GM12878 (cell line): ENCODE measurements at regions of chr4 and their contacts with region 1.

Region 1: GRCh38 chr4:2745981-2746806 is 9.9 kb downstream of the TNIP2 start:
- DNase-seq: peak; percentile 98
- ATAC-seq: peak; percentile 93
- H3K4me3 ChIP-seq: peak overlapping the region; percentile 22
- H3K27ac ChIP-seq: peak overlapping the region; percentile 98
- H3K4me1 ChIP-seq: peaks cover 47% of the 10 kb centered on the region
- H3K27me3 ChIP-seq: no peaks in the 10 kb centered on the region
- CTCF ChIP-seq: no peak
- EP300 ChIP-seq: peak; percentile 89 to 98
- POLR2A ChIP-seq: peak; percentile 58; the same call in 1 of the 2 replicates
- RAD21 ChIP-seq: no peak

Region 2: GRCh38 chr4:2689825-2690700 is 56.1 kb before region 1 on chr4:
- CTCF ChIA-PET with region 1: interaction called, 18 read pairs
- POLR2A ChIA-PET with region 1: interaction called, 16 read pairs
- RAD21 ChIA-PET with region 1: interaction called, 25 read pairs
- SMC1A ChIA-PET with region 1: interaction called, 31 read pairs
- in situ Hi-C with region 1: no loop called
- intact Hi-C with region 1: loop called (anchors 1 kb)
- DNase-seq: peak; percentile 51
- ATAC-seq: peak; percentile 87
- H3K4me3 ChIP-seq: no peak overlapping the region
- H3K27ac ChIP-seq: peak overlapping the region; percentile 66
- H3K4me1 ChIP-seq: peaks cover 40% of the 10 kb centered on the region
- H3K27me3 ChIP-seq: no peaks in the 10 kb centered on the region
- CTCF ChIP-seq: no peak
- EP300 ChIP-seq: no peak
- POLR2A ChIP-seq: peak; percentile 57
- RAD21 ChIP-seq: no peak

Region 3: DNA sequence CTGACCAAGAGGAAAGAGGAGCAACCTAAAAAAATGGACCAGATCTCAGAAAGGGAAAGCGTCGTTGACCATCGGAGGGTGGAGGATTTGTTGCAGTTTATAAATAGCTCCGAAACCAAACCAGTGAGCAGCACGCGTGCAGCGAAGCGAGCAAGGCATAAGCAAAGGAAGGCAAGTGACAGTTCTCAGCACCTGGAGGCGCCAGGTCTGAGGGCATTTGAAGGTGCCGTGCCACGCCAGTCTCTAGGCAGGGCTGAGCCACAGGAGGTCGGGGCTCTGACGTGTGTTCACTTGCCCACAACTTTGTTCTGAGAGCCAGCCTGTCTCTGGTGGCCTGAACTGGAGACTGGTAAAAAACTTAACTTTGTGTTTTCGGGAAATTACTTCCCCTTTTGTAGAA is 49.8 kb before region 1 on chr4:
- CTCF ChIA-PET with region 1: interaction called, 18 read pairs
- POLR2A ChIA-PET with region 1: interaction called, 16 read pairs
- RAD21 ChIA-PET with region 1: interaction called, 25 read pairs
- SMC1A ChIA-PET with region 1: interaction called, 31 read pairs
- in situ Hi-C with region 1: no loop called
- intact Hi-C with region 1: loop called (anchors 1 kb)
- DNase-seq: peak; percentile 96
- ATAC-seq: peak; percentile 97
- H3K4me3 ChIP-seq: peak overlapping the region; percentile 22; the same call in 1 of the 2 replicates
- H3K27ac ChIP-seq: peak overlapping the region; percentile 90
- H3K4me1 ChIP-seq: peaks cover 32% of the 10 kb centered on the region
- H3K27me3 ChIP-seq: no peaks in the 10 kb centered on the region
- CTCF ChIP-seq: peak; percentile 13 to 49 (median 27); a peak in 3 of 6 replicates
- EP300 ChIP-seq: peak; percentile 75 to 94
- POLR2A ChIP-seq: peak; percentile 41; the same call in 1 of the 2 replicates
- RAD21 ChIP-seq: peak; percentile 46; the same call in 1 of the 2 replicates

Region 4: DNA sequence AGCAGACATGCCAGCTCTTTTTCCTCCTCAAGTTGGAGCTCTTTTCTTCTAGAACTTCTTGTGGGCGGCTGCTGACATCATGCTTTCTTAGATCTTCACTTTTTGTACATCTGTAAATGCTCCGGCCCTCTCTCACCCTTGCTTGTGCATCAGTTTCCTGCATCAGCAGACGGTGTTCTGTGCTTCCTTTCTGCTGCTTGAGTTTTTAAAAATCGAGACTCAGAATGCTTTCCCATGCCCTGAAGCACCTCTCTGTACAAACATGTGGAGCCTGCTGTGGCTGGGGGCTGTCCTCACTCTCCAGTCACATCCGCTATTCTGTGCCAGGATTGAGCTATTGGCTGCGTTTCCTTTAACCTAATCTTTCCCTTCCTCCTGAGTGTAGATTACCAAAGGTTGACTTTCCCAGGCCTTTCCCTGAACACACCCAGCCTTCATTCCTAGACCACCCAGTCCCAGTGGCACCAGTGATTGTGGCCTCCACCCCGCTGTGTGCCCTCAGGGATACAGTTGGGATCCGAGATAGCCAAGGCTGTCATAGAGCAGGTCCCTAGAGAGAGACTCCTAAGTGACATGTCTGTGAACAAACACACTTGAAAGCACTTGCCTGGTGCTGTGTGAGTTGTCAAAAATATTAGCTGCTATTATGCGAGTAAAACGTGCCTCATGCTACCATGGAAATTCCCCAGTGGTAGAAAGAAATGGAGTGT is 32.0 kb before region 1 on chr4:
- CTCF ChIA-PET with region 1: no interaction called
- POLR2A ChIA-PET with region 1: no interaction called
- RAD21 ChIA-PET with region 1: no interaction called
- SMC1A ChIA-PET with region 1: interaction called, 3 read pairs
- in situ Hi-C with region 1: no loop called
- intact Hi-C with region 1: loop called (anchors 5 kb)
- DNase-seq: no peak
- ATAC-seq: peak; percentile 34; the same call in 2 of the 3 replicates
- H3K4me3 ChIP-seq: no peak overlapping the region
- H3K27ac ChIP-seq: peak overlapping the region; percentile 73
- H3K4me1 ChIP-seq: peaks cover 20% of the 10 kb centered on the region
- H3K27me3 ChIP-seq: no peaks in the 10 kb centered on the region
- CTCF ChIP-seq: no peak
- EP300 ChIP-seq: no peak
- POLR2A ChIP-seq: no peak
- RAD21 ChIP-seq: peak; percentile 25; the same call in 1 of the 2 replicates

Region 5: DNA sequence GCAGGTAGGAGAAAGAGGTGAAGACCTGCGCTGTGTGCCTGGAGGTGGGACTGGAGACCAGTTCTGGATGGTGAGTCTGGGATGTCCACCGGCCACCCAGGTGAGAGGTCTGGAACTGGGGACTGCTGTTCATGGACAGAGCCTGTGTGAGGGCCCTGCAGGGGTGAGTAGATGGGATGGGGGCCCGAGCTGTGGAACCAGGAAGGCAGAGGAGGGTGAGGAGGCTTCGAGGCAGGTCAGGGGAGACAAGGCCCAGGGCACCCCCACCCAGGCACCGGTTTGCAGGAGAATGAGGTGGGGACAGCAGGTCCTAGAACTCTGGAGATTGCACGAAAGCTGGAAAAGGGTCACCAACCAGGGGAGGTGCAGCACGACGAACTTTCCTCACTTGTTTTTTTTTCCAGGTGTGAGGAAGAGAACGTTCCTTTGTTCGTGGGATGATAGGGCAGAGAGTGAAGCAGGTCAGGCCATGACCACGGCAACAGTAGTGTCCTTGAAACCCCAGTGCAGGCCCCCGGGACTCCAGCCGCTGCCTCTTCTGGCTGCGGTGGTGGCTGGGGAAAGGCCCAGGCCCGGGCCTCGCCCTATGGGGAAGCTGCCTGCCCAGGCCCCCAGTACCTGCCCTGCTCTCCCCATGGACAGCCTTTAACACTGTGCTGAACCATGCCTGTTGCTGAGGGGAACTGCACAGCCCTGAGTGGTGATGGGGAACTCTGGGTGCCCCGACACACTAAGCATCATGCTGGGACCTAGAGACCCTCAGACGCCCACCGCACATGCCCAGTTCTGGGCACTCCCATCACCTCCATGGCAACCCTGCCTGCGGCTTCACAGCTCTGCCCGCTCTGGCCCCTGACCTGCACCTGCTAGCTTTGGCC is 13.0 kb before region 1 on chr4:
- CTCF ChIA-PET with region 1: interaction called, 3 read pairs
- POLR2A ChIA-PET with region 1: interaction called, 9 read pairs
- RAD21 ChIA-PET with region 1: interaction called, 16 read pairs
- SMC1A ChIA-PET with region 1: interaction called, 11 read pairs
- in situ Hi-C with region 1: no loop called
- intact Hi-C with region 1: no loop called
- DNase-seq: no peak
- ATAC-seq: peak; percentile 53
- H3K4me3 ChIP-seq: no peak overlapping the region
- H3K27ac ChIP-seq: no peak overlapping the region
- H3K4me1 ChIP-seq: peaks cover 3% of the 10 kb centered on the region; the same call in 1 of the 2 replicates
- H3K27me3 ChIP-seq: no peaks in the 10 kb centered on the region
- CTCF ChIP-seq: no peak
- EP300 ChIP-seq: no peak
- POLR2A ChIP-seq: peak; percentile 24; the same call in 1 of the 2 replicates
- RAD21 ChIP-seq: no peak